ENCODE measurements at regions of chr1 and their contacts with region 1.

Region 1: DNA sequence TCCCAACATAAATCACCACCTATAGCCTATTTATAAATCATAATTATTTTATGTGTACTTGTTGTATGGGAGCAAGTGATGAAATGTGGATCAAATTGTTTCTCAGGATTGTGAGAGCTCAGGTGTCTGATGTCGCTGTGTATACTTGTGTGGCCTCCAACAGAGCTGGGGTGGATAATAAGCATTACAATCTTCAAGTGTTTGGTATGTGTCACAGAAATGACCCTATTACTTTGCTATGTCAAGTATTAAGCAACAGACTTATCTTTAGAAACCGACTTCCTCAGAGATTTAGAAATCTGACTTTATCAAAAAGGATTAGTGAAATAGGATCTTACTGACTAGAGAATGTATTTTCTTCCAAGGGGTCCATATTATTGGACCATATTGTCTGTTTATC is 280.9 kb downstream of the TPR start:
- DNase-seq: no peak
- ATAC-seq: no peak
- H3K4me3 Mint-ChIP-seq: no peak overlapping the region
- H3K27ac Mint-ChIP-seq: no peak overlapping the region
- H3K4me1 Mint-ChIP-seq: no peaks in the 10 kb centered on the region
- H3K27me3 Mint-ChIP-seq: peaks cover 5% of the 10 kb centered on the region

Region 2: GRCh38 chr1:186104459-186104858 is 10.3 kb after region 1 on chr1:
- CTCF ChIA-PET with region 1: interaction called, 3 read pairs
- POLR2A ChIA-PET with region 1: no interaction called
- intact Hi-C with region 1: loop called in 1 of 2 experiments (anchors 1 kb)
- DNase-seq: no peak
- ATAC-seq: no peak
- H3K4me3 Mint-ChIP-seq: no peak overlapping the region
- H3K27ac Mint-ChIP-seq: no peak overlapping the region
- H3K4me1 Mint-ChIP-seq: no peaks in the 10 kb centered on the region
- H3K27me3 Mint-ChIP-seq: peaks cover 2% of the 10 kb centered on the region